Esophagus muscularis mucosa (tissue), 4 donors: ENCODE measurements at regions of chr13 and their contacts with region 1.

Region 1: GRCh38 chr13:30465585-30466357 is at the start of gene HMGB1:
- DNase-seq: peak; percentile 100
- H3K4me3 ChIP-seq: peak within 1 kb of the TSS; percentile 79 to 98 (median 96)
- H3K27ac ChIP-seq: peak within 1 kb of the TSS; percentile 98 to 100 (median 99)
- H3K4me1 ChIP-seq: peaks cover 27 to 34% (median 33%) of the 10 kb centered on the region in 4 donors
- H3K27me3 ChIP-seq: no peaks in the 10 kb centered on the region
- CTCF ChIP-seq: no peak
- EP300 ChIP-seq: no peak
- POLR2A ChIP-seq: peak; percentile 91
- total RNA-seq, gene HMGB1: 169 to 229 (median 218) TPM

Region 2: GRCh38 chr13:29850224-29850898 is 615.4 kb before region 1 on chr13 and contains the start of gene UBL3:
- intact Hi-C with region 1: loop called (anchors 10 kb)
- DNase-seq: peak; percentile 99
- H3K4me3 ChIP-seq: peak within 1 kb of the TSS; percentile 80 to 96 (median 84)
- H3K27ac ChIP-seq: peak within 1 kb of the TSS; percentile 96 to 99 (median 98)
- H3K4me1 ChIP-seq: peaks cover 15 to 23% (median 21%) of the 10 kb centered on the region in 4 donors
- H3K27me3 ChIP-seq: no peaks in the 10 kb centered on the region
- CTCF ChIP-seq: no peak
- EP300 ChIP-seq: no peak
- POLR2A ChIP-seq: peak; percentile 75
- total RNA-seq, gene UBL3: 30.2 to 44.5 (median 32.6) TPM

Region 3: GRCh38 chr13:30319655-30320054 is 146.1 kb before region 1 on chr13:
- intact Hi-C with region 1: no loop called
- DNase-seq: no peak
- H3K4me3 ChIP-seq: no peak overlapping the region
- H3K27ac ChIP-seq: peak overlapping the region in 1 of 4 donors; percentile 9
- H3K4me1 ChIP-seq: peaks cover 14 to 30% (median 21%) of the 10 kb centered on the region in 4 donors
- H3K27me3 ChIP-seq: no peaks in the 10 kb centered on the region
- CTCF ChIP-seq: no peak
- EP300 ChIP-seq: no peak
- POLR2A ChIP-seq: no peak

Region 4: GRCh38 chr13:30408319-30409101 is 57.3 kb before region 1 on chr13:
- intact Hi-C with region 1: loop called (anchors 5 kb)
- DNase-seq: peak; percentile 98
- H3K4me3 ChIP-seq: peak overlapping the region; percentile 48 to 52 (median 50)
- H3K27ac ChIP-seq: peak overlapping the region; percentile 81 to 91 (median 86)
- H3K4me1 ChIP-seq: peaks cover 11 to 49% (median 36%) of the 10 kb centered on the region in 4 donors
- H3K27me3 ChIP-seq: no peaks in the 10 kb centered on the region
- CTCF ChIP-seq: peak; percentile 85 to 96 (median 96)
- EP300 ChIP-seq: no peak
- POLR2A ChIP-seq: no peak

Region 5: DNA sequence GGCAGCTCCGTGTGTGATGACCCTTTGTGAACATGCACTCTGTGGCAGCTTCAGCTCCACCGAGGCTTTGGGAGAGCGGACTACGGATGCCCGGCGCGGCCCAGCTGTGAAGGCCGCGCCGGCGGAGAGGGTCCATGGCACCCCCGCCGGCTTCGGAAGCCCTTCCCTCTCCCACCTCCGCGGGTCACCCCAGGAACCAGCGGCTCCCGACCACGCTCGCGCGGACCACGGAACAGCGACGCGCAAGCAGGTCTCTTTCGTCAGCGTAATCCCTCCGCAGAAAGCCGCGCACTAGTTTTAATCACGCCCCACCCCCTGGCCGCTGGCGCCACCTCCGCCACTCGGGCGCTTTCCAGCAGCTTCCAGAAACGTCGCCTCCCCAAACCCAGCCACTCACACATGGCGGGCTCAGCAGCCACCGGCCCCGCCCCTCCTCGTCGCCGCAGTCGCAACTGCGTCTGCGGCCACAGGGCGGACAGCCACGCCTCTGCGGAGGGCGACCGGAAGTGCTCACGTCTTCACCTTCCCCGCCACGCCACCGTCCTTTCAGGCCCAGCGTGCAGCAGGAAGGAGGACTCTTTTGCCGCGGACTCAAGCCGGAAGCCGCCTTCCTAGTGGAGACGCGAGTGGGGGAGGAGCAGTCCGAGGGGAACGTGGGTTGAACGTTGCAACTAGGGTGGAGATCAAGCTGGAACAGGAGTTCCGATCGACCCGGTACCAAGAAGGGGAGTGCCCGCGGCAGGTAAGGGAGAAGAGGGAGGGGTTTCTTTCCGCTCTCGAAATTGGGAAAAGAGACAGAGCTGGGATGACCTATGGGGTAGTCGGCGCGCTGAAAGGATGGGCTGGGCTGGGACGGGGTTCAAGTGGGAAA is 151.8 kb after region 1 on chr13 and contains the start of gene USPL1:
- intact Hi-C with region 1: loop called (anchors 2 kb)
- DNase-seq: peak; percentile 99
- H3K4me3 ChIP-seq: peak within 1 kb of the TSS; percentile 78 to 95 (median 90)
- H3K27ac ChIP-seq: peak within 1 kb of the TSS; percentile 97 to 100 (median 99)
- H3K4me1 ChIP-seq: peaks cover 15 to 40% (median 39%) of the 10 kb centered on the region in 4 donors
- H3K27me3 ChIP-seq: no peaks in the 10 kb centered on the region
- CTCF ChIP-seq: peak in 2 of 3 experiments; percentile 38 to 45
- EP300 ChIP-seq: peak; percentile 23
- POLR2A ChIP-seq: peak; percentile 92
- total RNA-seq, gene USPL1: 13.2 to 21.6 (median 19.4) TPM

Region 6: GRCh38 chr13:30802953-30803478 is 337.2 kb after region 1 on chr13:
- intact Hi-C with region 1: loop called (anchors 5 kb)
- DNase-seq: peak; percentile 94
- H3K4me3 ChIP-seq: peak overlapping the region; percentile 45 to 60 (median 50)
- H3K27ac ChIP-seq: peak overlapping the region; percentile 37 to 77 (median 68)
- H3K4me1 ChIP-seq: peaks cover 18 to 50% (median 43%) of the 10 kb centered on the region in 4 donors
- H3K27me3 ChIP-seq: peaks cover 0 to 5% (median 0%) of the 10 kb centered on the region in 4 donors
- CTCF ChIP-seq: peak in 2 of 3 experiments; percentile 92 to 93
- EP300 ChIP-seq: no peak
- POLR2A ChIP-seq: no peak

Region 7: GRCh38 chr13:31044377-31045285 is 578.9 kb after region 1 on chr13:
- intact Hi-C with region 1: loop called (anchors 10 kb)
- DNase-seq: peak; percentile 97
- H3K4me3 ChIP-seq: no peak overlapping the region
- H3K27ac ChIP-seq: no peak overlapping the region
- H3K4me1 ChIP-seq: peaks cover 23 to 35% (median 30%) of the 10 kb centered on the region in 4 donors
- H3K27me3 ChIP-seq: no peaks in the 10 kb centered on the region
- CTCF ChIP-seq: peak; percentile 82 to 97 (median 89)
- EP300 ChIP-seq: no peak
- POLR2A ChIP-seq: no peak

Region 8: GRCh38 chr13:31131470-31131961 is 665.7 kb after region 1 on chr13:
- intact Hi-C with region 1: no loop called
- DNase-seq: no peak
- H3K4me3 ChIP-seq: no peak overlapping the region
- H3K27ac ChIP-seq: no peak overlapping the region
- H3K4me1 ChIP-seq: no peaks in the 10 kb centered on the region
- H3K27me3 ChIP-seq: peaks cover 0 to 5% (median 0%) of the 10 kb centered on the region in 4 donors
- CTCF ChIP-seq: no peak
- EP300 ChIP-seq: no peak
- POLR2A ChIP-seq: no peak